Activated T-helper 2 cell treated with anti-CD3 and anti-CD28 coated beads, Interferon-gamma antibody, Interleukin-2, Interleukin-4, amounts not matched to agents 10 μg/mL and 5 μg/mL and 100 μg/mL, durations not matched to agents 14 hours and 24 hours and 36 hours (primary cell): ENCODE measurements at regions of chr1 and their contacts with region 1.

Region 1: GRCh38 chr1:184163674-184164465 is 112.3 kb downstream of the TSEN15 start:
- DNase-seq: no peak
- H3K4me3 Mint-ChIP-seq: no peak overlapping the region
- H3K27ac Mint-ChIP-seq: peak overlapping the region; percentile 7
- H3K4me1 Mint-ChIP-seq: peaks cover 21% of the 10 kb centered on the region
- H3K27me3 Mint-ChIP-seq: peaks cover under 1% of the 10 kb centered on the region

Region 2: DNA sequence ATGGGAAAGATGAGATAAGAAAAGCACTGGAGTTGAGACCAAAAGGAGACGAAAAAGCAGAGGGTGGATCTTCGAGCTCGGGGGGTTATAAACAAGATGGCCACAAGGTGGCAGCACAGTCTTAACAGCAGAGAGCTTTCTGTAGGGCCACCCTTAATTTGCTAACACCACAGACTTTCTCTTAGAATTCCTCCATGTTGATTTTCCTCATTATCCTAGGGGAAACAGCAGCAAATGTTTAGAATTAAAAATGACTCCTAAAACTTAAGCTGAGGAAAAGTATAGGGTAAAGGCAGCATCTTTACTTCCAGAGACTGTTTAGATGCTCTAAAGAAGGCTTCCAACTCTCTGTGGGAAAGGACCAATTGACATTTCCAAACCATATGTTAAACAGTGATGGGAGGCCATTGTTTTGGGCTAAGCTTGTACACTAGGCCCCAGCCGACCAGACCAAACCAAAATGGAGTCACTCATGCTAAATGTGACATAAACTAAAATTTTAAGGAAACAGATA is 508.3 kb before region 1 on chr1:
- intact Hi-C with region 1: loop called (anchors 2 kb)
- DNase-seq: peak; percentile 44
- H3K4me3 Mint-ChIP-seq: no peak overlapping the region
- H3K27ac Mint-ChIP-seq: no peak overlapping the region
- H3K4me1 Mint-ChIP-seq: peaks cover 38% of the 10 kb centered on the region
- H3K27me3 Mint-ChIP-seq: no peaks in the 10 kb centered on the region

Region 3: GRCh38 chr1:183956559-183957188 is 207.2 kb before region 1 on chr1:
- intact Hi-C with region 1: loop called (anchors 1 kb)
- DNase-seq: peak; percentile 63
- H3K4me3 Mint-ChIP-seq: no peak overlapping the region
- H3K27ac Mint-ChIP-seq: peak overlapping the region; percentile 88
- H3K4me1 Mint-ChIP-seq: peaks cover 18% of the 10 kb centered on the region
- H3K27me3 Mint-ChIP-seq: no peaks in the 10 kb centered on the region

Region 4: DNA sequence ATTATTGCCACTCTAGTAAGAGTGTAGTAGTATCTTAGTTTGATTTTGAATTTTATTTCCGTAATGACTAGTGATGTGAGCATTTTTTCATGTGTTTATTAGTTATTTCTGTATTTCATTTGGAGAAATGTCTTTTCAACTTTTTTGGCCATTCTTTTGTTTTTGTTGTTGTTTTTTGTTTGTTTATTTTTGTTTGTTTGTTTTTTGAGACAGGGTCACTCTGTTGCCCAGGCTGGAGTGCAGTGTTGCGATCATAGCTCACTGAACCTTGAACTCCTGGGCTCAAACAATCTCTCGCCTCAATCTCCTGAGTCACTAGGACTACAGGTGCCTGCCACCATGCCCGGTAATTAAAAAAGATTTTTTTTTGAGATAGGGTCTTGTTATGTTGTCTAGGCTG is 36.4 kb before region 1 on chr1:
- intact Hi-C with region 1: loop called (anchors 1 kb)
- DNase-seq: no peak
- H3K4me3 Mint-ChIP-seq: no peak overlapping the region
- H3K27ac Mint-ChIP-seq: no peak overlapping the region
- H3K4me1 Mint-ChIP-seq: peaks cover 5% of the 10 kb centered on the region
- H3K27me3 Mint-ChIP-seq: peaks cover 3% of the 10 kb centered on the region

Region 5: DNA sequence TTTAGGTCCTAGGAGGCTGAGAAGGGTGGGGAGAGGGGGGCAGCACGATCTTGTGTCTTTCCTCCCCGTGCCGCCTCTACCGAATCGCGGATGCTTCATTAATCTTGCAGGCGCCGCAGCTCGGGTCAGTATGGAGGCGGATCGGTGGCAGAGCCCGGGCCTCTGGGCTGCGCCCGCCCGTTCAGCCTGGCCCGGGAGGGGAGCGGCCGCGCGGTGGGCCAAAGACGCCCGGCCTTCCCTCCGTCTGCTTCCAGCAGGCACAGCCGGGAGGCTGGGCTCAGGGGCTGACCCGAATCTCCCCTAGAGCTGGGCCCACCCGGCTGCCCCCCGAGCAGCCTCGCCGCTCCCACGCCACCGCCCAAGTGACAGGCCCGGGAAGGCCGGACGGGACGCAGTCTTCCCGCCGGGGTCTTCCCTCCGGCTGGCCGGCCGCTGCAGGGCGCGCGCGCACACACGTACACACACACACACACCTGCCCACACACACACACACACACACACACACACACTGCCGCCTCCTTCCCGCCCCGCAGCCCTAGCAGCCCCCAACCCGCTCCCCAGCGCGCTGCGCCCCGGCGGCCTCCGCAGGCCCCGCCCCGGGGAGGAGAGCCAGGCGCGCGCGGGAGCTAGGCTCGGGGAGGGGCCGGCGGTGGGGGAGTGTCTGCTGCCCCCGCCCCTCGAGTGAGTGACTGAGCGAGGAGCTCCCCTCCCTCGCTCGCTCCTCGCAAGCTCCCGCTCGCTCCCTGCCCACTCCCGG is 222.6 kb after region 1 on chr1 and contains the start of gene C1orf21:
- intact Hi-C with region 1: loop called (anchors 5 kb)
- DNase-seq: peak; percentile 70
- H3K4me3 Mint-ChIP-seq: peak within 1 kb of the TSS; percentile 87
- H3K27ac Mint-ChIP-seq: peak within 1 kb of the TSS; percentile 70
- H3K4me1 Mint-ChIP-seq: peaks cover 22% of the 10 kb centered on the region
- H3K27me3 Mint-ChIP-seq: peaks cover 76% of the 10 kb centered on the region
- total RNA-seq, gene C1orf21: 3.4 and 4.2 TPM in 2 replicates

Region 6: DNA sequence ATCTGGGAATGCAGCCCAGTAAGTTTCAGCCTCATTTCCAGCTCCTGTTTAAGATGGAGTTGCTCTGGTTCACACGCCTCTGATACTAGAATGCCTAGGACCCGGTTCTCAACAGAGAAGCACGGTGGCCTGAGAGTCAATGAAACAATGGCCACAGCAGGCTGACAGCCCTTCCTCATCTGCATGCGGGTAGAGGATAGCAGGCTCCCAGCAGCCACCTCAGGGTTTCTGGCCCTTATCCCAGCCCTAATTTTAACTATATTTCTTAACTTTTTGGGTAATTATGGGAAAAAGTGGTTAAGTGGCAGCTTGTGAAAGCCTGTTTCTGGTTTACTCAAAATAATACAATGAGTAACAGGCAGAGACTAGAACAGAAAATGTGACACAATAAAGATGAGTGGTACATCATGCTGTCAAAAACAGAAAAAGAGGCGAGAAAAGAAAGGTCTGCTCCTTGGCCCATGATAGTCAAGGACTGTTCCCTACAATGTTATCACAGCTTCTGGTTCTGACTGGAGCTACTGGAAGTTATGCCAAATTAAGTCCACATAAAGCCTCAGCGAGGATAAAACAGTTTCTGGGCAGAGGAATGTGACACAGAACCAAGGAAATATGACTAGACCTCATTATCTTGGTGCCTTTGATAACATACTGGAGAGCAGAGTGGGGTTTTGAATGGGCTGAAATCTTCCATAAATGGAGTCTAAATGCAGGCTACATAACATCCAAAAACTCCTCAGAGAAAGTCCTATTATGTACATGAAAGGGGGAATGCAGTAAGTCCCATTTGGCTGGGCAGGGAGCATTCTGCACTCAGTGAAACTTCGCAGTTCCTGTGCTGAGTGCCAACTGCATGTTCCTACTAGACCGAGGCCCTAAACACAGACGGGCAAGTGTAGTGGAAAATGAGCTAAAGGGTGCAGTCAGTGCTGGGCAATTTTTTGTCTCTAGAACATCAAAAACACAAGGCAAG is 718.4 kb after region 1 on chr1:
- intact Hi-C with region 1: loop called (anchors 2 kb)
- DNase-seq: no peak
- H3K4me3 Mint-ChIP-seq: peak overlapping the region; percentile 1
- H3K27ac Mint-ChIP-seq: peak overlapping the region; percentile 90
- H3K4me1 Mint-ChIP-seq: peaks cover 31% of the 10 kb centered on the region
- H3K27me3 Mint-ChIP-seq: peaks cover 5% of the 10 kb centered on the region

Region 7: DNA sequence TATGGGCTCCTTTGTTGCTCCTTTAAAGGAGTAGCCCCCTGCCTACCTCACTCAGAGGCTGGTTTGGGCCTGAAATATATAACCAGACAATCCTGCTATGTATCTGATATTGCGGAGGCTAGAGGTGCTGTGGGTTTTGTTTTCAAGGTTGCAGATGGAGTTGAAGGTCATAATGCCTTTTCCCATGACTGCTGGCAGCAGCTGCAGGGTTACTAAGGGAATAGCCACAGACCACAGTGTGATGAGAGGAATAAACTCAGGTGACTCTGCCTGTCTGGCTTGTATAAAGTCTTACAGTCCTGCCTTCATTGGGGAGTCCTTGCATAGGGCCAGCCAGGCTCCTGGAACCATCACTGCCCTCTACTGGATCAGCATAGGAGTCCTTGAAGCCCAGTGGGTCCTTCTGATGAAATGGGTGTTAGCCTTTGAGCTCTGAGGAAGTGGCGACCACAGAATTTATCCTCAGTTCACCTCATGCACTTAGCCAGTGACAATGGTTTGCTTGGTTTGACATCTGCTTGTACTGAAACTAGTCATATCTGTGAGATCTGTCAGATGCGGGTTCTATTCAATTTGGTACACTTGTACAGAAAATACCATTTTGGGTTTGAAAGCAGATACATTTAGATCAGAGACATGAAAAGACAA is 1395.9 kb after region 1 on chr1:
- intact Hi-C with region 1: loop called (anchors 10 kb)
- DNase-seq: peak; percentile 75
- H3K4me3 Mint-ChIP-seq: peak overlapping the region; percentile 5
- H3K27ac Mint-ChIP-seq: peak overlapping the region; percentile 71
- H3K4me1 Mint-ChIP-seq: peaks cover 51% of the 10 kb centered on the region
- H3K27me3 Mint-ChIP-seq: no peaks in the 10 kb centered on the region